Vagina (tissue), 2 donors: ENCODE measurements at regions of chr10 and their contacts with region 1.

Region 1: DNA sequence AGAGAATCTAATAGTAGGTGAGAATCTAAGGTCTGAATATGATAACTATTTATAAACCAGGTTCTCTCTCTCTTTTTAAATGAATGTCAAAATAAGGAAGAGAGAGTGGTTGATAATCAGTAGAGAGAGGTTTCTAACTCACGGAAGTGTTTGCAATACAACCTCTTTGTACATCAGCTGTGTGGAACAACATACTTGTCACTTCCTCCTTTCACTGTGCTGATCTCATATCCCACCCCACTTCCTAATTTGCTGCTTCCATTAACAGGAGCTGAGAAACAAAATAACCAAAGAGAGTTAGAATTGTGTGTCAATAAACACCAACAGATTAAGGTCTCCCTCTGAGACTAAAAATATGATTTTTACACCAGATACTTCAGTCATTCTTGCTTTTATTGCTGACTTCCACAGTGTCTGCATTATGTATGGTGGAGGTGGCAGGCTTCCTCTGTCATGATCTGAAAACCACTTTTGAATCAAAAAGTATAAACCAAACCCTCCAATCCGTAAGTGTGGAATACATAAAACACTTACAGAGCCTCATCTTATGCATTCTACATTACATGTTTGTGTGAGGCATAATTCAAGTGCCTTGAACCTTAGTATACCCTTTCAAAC is 25.0 kb downstream of the CACUL1 start:
- DNase-seq: no peak
- H3K4me3 ChIP-seq: no peak overlapping the region
- H3K27ac ChIP-seq: no peak overlapping the region
- H3K4me1 ChIP-seq: peaks cover 69% of the 10 kb centered on the region
- H3K27me3 ChIP-seq: no peaks in the 10 kb centered on the region
- CTCF ChIP-seq: no peak
- POLR2A ChIP-seq: no peak

Region 2: GRCh38 chr10:118568327-118568848 is 161.4 kb before region 1 on chr10:
- intact Hi-C with region 1: loop called (anchors 5 kb)
- DNase-seq: peak in 1 of 2 donors; percentile 25
- H3K4me3 ChIP-seq: no peak overlapping the region
- H3K27ac ChIP-seq: no peak overlapping the region
- H3K4me1 ChIP-seq: peaks cover 27% of the 10 kb centered on the region
- H3K27me3 ChIP-seq: no peaks in the 10 kb centered on the region
- CTCF ChIP-seq: peak; percentile 58 to 75 (median 67)
- POLR2A ChIP-seq: no peak